Naive thymus-derived CD4-positive, alpha-beta T cell (primary cell): ENCODE measurements at regions of chr15 and their contacts with region 1.

Region 1: DNA sequence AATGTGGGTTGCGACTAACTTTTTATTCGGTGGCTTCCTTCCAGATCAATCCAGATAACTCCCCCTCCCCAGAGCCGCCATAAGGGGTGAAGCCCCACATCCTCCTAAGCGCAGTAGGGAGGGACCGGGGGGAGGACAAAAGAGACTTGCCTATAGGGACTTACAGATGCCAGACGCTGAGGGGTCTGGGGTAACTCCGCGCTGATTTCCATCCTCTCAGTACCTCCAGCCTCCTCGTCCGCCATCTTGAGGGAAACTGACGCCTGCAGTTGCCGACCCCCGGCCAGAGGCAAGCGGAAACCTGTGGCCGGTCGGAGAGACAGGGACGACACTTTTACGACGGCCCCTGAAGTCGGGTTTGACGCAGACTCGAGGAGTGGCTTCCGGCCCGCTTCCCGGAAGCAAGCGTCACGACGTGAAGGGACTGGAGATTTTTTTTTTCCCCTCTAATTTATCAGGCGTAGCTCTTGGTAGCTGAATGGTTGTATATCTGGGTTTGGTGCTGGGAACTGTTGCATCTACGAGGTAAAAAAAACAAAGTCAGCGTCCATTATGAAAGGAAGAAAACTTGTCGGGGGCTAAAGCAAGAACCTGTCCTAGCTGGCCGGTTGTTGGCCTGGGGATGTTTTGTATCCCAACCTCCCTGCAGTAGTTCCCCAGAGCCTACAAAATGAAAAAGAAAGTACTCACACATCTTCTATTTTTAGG is at the start of gene UBR1:
- DNase-seq: peak; percentile 65 to 91 (median 89)
- ATAC-seq: peak; percentile 94
- H3K4me3 ChIP-seq: peak within 1 kb of the TSS; percentile 86
- H3K4me3 Mint-ChIP-seq: peak within 1 kb of the TSS; percentile 86 to 99 (median 95)
- H3K27ac ChIP-seq: peak within 1 kb of the TSS; percentile 99
- H3K27ac Mint-ChIP-seq: peak within 1 kb of the TSS; percentile 97 to 99 (median 98)
- H3K4me1 ChIP-seq: peaks cover 21 to 24% of the 10 kb centered on the region in 2 donors
- H3K4me1 Mint-ChIP-seq: peaks cover 40 to 56% (median 52%) of the 10 kb centered on the region in 7 donors
- H3K27me3 ChIP-seq: no peaks in the 10 kb centered on the region
- H3K27me3 Mint-ChIP-seq: peaks cover 0 to 5% (median 0%) of the 10 kb centered on the region in 5 donors
- total RNA-seq, gene UBR1: 38.4 to 51.7 (median 48.0) TPM

Region 2: GRCh38 chr15:42736793-42737528 is 369.0 kb before region 1 on chr15 and contains the start of gene CDAN1:
- CTCF ChIA-PET with region 1: no interaction called
- POLR2A ChIA-PET with region 1: no interaction called
- intact Hi-C with region 1: loop called in 1 of 2 experiments (anchors 1 kb)
- DNase-seq: peak; percentile 80 to 95 (median 87)
- ATAC-seq: peak; percentile 97
- H3K4me3 ChIP-seq: peak within 1 kb of the TSS; percentile 65
- H3K4me3 Mint-ChIP-seq: peak within 1 kb of the TSS; percentile 79 to 90 (median 86)
- H3K27ac ChIP-seq: peak within 1 kb of the TSS; percentile 87
- H3K27ac Mint-ChIP-seq: peak within 1 kb of the TSS; percentile 78 to 91 (median 86)
- H3K4me1 ChIP-seq: peaks cover 5 to 6% of the 10 kb centered on the region in 2 donors
- H3K4me1 Mint-ChIP-seq: peaks cover 13 to 26% (median 20%) of the 10 kb centered on the region in 7 donors
- H3K27me3 ChIP-seq: no peaks in the 10 kb centered on the region
- H3K27me3 Mint-ChIP-seq: no peaks in the 10 kb centered on the region
- total RNA-seq, gene CDAN1: 25.8 to 38.0 (median 28.3) TPM

Region 3: GRCh38 chr15:42891569-42891968 is 214.4 kb before region 1 on chr15:
- CTCF ChIA-PET with region 1: no interaction called
- POLR2A ChIA-PET with region 1: no interaction called
- intact Hi-C with region 1: no loop called
- DNase-seq: no peak
- ATAC-seq: no peak
- H3K4me3 ChIP-seq: no peak overlapping the region
- H3K4me3 Mint-ChIP-seq: no peak overlapping the region
- H3K27ac ChIP-seq: no peak overlapping the region
- H3K27ac Mint-ChIP-seq: no peak overlapping the region
- H3K4me1 ChIP-seq: no peaks in the 10 kb centered on the region
- H3K4me1 Mint-ChIP-seq: peaks cover 0 to 17% (median 8%) of the 10 kb centered on the region in 7 donors
- H3K27me3 ChIP-seq: no peaks in the 10 kb centered on the region
- H3K27me3 Mint-ChIP-seq: no peaks in the 10 kb centered on the region

Region 4: GRCh38 chr15:43127752-43128151 is 21.8 kb after region 1 on chr15:
- CTCF ChIA-PET with region 1: no interaction called
- POLR2A ChIA-PET with region 1: interaction called, 9 read pairs
- intact Hi-C with region 1: loop called (anchors 1 kb)
- DNase-seq: no peak
- ATAC-seq: no peak
- H3K4me3 ChIP-seq: no peak overlapping the region
- H3K4me3 Mint-ChIP-seq: no peak overlapping the region
- H3K27ac ChIP-seq: no peak overlapping the region
- H3K27ac Mint-ChIP-seq: no peak overlapping the region
- H3K4me1 ChIP-seq: peaks cover 0 to 4% of the 10 kb centered on the region in 2 donors
- H3K4me1 Mint-ChIP-seq: peaks cover 8 to 19% (median 13%) of the 10 kb centered on the region in 7 donors
- H3K27me3 ChIP-seq: no peaks in the 10 kb centered on the region
- H3K27me3 Mint-ChIP-seq: peaks cover 5 to 28% (median 7%) of the 10 kb centered on the region in 5 donors

Region 5: GRCh38 chr15:43133430-43134156 is 27.7 kb after region 1 on chr15 and contains the start of gene TMEM62:
- CTCF ChIA-PET with region 1: no interaction called
- POLR2A ChIA-PET with region 1: interaction called, 6 read pairs
- intact Hi-C with region 1: loop called (anchors 1 kb)
- DNase-seq: peak; percentile 33 to 67 (median 46)
- ATAC-seq: peak; percentile 88
- H3K4me3 ChIP-seq: peak within 1 kb of the TSS; percentile 65
- H3K4me3 Mint-ChIP-seq: peak within 1 kb of the TSS; percentile 86 to 97 (median 95)
- H3K27ac ChIP-seq: peak within 1 kb of the TSS; percentile 72
- H3K27ac Mint-ChIP-seq: peak within 1 kb of the TSS; percentile 77 to 93 (median 89)
- H3K4me1 ChIP-seq: peaks cover 6 to 11% of the 10 kb centered on the region in 2 donors
- H3K4me1 Mint-ChIP-seq: peaks cover 13 to 29% (median 22%) of the 10 kb centered on the region in 7 donors
- H3K27me3 ChIP-seq: no peaks in the 10 kb centered on the region
- H3K27me3 Mint-ChIP-seq: peaks cover 0 to 15% (median 7%) of the 10 kb centered on the region in 5 donors
- total RNA-seq, gene TMEM62: 12.0 to 21.5 (median 17.7) TPM

Region 6: GRCh38 chr15:43150191-43150929 is 44.4 kb after region 1 on chr15:
- CTCF ChIA-PET with region 1: no interaction called
- POLR2A ChIA-PET with region 1: no interaction called
- intact Hi-C with region 1: loop called in 1 of 2 experiments (anchors 1 kb)
- DNase-seq: no peak
- ATAC-seq: no peak
- H3K4me3 ChIP-seq: no peak overlapping the region
- H3K4me3 Mint-ChIP-seq: no peak overlapping the region
- H3K27ac ChIP-seq: no peak overlapping the region
- H3K27ac Mint-ChIP-seq: no peak overlapping the region
- H3K4me1 ChIP-seq: peaks cover 4 to 5% of the 10 kb centered on the region in 2 donors
- H3K4me1 Mint-ChIP-seq: peaks cover 5 to 21% (median 14%) of the 10 kb centered on the region in 7 donors
- H3K27me3 ChIP-seq: no peaks in the 10 kb centered on the region
- H3K27me3 Mint-ChIP-seq: no peaks in the 10 kb centered on the region

Region 7: DNA sequence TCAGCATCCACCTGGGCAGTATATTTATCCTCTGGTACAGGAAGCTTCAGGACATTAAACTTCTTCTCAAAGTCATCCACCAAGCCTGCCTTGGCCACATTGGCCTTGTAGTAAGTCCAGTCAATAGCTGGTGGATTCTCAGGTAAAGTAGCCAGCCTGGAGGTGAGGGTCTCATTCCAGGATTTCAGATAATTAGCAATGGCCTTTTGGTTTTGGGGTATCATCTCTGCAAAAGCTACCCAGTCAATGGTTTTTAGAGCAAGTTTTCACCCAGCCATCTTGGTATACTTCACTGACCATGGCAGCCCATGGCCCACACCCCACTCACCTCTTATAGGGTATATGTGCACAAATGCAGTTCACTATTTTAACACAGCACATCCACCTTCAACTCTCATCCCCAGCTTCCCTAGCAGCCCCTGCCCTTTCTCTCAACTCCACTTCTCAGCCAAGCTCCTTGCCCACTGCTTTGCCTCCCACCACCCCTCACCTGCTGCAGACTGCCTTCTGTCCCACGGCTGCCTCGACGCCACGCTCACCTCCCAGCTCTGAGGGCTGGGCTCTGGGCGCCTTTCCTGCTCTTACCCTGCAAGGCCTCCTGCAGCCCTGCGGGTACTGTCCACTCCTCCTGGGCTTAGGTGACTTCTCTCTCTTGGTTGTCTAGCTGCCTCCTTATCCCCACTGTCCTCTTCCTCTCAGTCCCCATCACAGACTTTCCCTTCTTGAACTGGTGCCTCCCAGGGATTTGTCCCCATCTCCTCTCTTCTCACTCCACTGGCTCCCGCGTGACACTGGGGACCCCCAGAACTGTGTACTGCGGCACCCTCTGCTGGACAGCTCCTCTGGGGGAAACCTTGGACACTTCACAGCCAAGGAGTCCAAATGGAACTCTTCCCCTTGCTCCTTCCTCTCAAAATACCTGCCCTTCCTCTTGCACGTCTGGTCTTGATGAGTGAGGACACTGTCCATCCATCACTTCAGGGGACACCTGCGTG is 162.5 kb after region 1 on chr15:
- CTCF ChIA-PET with region 1: no interaction called
- POLR2A ChIA-PET with region 1: no interaction called
- intact Hi-C with region 1: no loop called
- DNase-seq: no peak
- ATAC-seq: no peak
- H3K4me3 ChIP-seq: no peak overlapping the region
- H3K4me3 Mint-ChIP-seq: no peak overlapping the region
- H3K27ac ChIP-seq: no peak overlapping the region
- H3K27ac Mint-ChIP-seq: no peak overlapping the region
- H3K4me1 ChIP-seq: no peaks in the 10 kb centered on the region
- H3K4me1 Mint-ChIP-seq: peaks cover 0 to 8% (median 5%) of the 10 kb centered on the region in 7 donors
- H3K27me3 ChIP-seq: no peaks in the 10 kb centered on the region
- H3K27me3 Mint-ChIP-seq: peaks cover 0 to 22% (median 17%) of the 10 kb centered on the region in 5 donors